ENCODE measurements at regions of chr5 and their contacts with region 1.

Region 1: DNA sequence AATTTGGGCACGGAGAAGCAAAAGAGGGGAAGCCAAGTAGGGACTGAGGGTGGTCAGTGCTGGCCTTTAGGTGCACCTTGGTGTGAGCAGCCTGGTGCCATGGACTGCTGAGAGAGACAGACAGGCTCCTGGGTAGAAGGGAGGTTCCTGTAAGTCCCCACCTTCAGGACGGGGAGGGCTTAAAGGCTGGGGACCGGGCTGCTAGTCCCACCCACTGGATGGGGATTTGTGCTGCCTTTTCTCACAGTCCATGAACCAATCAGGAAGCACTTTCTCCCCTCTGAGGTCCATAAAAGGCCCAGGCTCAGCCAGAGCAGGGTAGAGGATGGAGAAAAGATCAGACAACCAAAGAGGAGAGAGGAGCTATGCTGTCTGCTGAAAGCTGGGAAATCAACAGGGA is 15.2 kb downstream of the CDC25C start:
- DNase-seq: no peak
- H3K4me3 ChIP-seq: no peak overlapping the region
- CTCF ChIP-seq: no peak

Region 2: DNA sequence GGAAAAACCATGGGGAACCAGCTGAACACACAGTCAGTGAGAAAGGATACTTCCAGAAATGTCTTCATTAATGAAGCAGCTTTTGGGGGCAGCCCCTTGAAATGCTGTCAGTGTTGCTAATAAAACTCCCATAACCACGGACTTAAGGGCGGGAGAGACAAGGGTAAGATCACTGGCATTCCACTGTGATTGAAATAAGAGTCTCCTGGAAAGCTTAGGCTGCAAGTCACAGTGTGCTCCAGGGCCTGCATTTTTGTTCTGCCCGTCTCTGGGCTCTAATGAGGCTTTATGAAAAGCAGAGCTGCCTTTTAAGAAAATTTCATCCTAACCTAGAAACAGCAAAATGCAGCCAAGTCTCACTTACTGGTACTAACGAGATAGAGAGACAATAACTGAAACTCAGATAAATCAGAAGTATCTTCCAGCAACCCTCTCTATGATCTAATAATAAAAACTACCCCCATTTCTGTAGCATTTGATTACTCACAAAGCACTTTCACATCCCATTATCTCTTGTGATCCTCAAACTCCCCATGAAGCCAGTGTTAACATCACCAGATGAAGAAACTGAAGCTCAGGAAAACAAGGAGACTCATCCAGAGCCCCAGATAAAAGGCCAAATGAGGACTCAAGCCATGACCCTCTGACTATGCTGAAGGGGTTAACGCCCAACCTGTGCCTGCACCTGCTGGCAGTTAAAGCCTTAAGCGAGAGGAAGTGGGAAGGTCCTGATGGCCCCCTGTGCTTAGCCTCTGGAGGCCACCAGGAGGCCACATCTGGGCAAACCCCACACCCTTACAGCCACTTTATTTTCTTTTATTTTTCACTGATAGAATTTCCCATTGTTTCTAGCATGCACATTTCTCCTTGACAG is 854.7 kb before region 1 on chr5:
- in situ Hi-C with region 1: no loop called
- DNase-seq: no peak
- H3K4me3 ChIP-seq: no peak overlapping the region
- CTCF ChIP-seq: no peak

Region 3: GRCh38 chr5:138226910-138227309 is 89.4 kb before region 1 on chr5:
- in situ Hi-C with region 1: no loop called
- DNase-seq: no peak
- H3K4me3 ChIP-seq: no peak overlapping the region
- CTCF ChIP-seq: no peak

Region 4: GRCh38 chr5:138241688-138242571 is 74.4 kb before region 1 on chr5:
- in situ Hi-C with region 1: loop called (anchors 10 kb)
- DNase-seq: no peak
- H3K4me3 ChIP-seq: peak overlapping the region; percentile 36
- CTCF ChIP-seq: no peak

Region 5: GRCh38 chr5:138264183-138264582 is 52.2 kb before region 1 on chr5:
- in situ Hi-C with region 1: no loop called
- DNase-seq: no peak
- H3K4me3 ChIP-seq: no peak overlapping the region
- CTCF ChIP-seq: no peak